Pancreas (tissue), 10 donors: ENCODE measurements at regions of chr5 and their contacts with region 1.

Region 1: GRCh38 chr5:120678279-120678678 is 214.2 kb downstream of the PRR16 start:
- DNase-seq: no peak
- ATAC-seq: no peak
- H3K4me3 ChIP-seq: no peak overlapping the region
- H3K27ac ChIP-seq: no peak overlapping the region
- H3K4me1 ChIP-seq: no peaks in the 10 kb centered on the region
- H3K27me3 ChIP-seq: no peaks in the 10 kb centered on the region
- CTCF ChIP-seq: no peak

Region 2: DNA sequence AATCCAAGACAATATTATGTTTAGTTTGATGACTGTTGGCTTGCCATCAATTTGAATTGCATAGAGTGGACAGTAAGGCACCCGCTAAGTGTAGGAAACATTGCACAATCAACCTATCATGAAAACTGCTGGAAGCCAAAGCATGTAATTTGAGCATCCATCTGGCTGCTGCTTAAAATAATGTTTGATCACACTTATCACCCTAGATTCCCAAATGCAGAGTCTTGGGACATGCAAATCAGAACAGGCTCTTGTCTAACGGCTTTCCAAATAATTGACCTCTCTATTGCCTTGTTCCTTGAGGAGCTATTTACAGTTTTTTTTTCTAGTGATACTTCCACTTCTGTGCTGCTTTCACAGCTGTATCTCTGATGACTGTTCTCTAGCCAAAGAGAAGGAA is 127.9 kb after region 1 on chr5:
- intact Hi-C with region 1: no loop called
- DNase-seq: no peak
- ATAC-seq: no peak
- H3K4me3 ChIP-seq: no peak overlapping the region
- H3K27ac ChIP-seq: no peak overlapping the region
- H3K4me1 ChIP-seq: no peaks in the 10 kb centered on the region
- H3K27me3 ChIP-seq: no peaks in the 10 kb centered on the region
- CTCF ChIP-seq: no peak

Region 3: DNA sequence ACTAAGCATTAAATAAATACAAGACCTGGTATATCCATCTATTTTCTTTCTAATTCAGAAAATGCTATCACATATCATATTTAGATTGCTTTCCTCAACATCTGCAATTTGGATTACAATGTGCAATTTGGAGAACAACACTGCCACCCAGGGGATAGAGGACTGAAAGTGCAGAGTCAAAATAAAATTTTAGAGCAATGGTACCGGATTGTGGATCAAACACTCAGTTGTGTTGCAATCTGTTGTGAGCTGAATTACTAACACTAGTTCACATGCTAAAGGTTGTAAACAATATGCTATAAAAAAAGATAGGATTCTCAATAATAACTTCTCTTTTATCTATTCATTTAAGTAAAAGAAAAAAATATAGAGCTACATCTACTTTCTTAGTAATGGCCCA is 1271.6 kb after region 1 on chr5:
- intact Hi-C with region 1: loop called in 1 of 3 experiments (anchors 10 kb)
- DNase-seq: peak in 3 of 6 donors; percentile 5 to 31 (median 17)
- ATAC-seq: peak in 3 of 4 donors; percentile 64 to 70 (median 64)
- H3K4me3 ChIP-seq: no peak overlapping the region
- H3K27ac ChIP-seq: no peak overlapping the region
- H3K4me1 ChIP-seq: no peaks in the 10 kb centered on the region
- H3K27me3 ChIP-seq: no peaks in the 10 kb centered on the region
- CTCF ChIP-seq: peak in 3 of 4 donors; percentile 23 to 29 (median 26)